A673 (cell line): ENCODE measurements at regions of chr2 and their contacts with region 1.

Region 1: GRCh38 chr2:7363906-7364305 is 446.7 kb downstream of the RNF144A start:
- DNase-seq: peak; percentile 25
- H3K4me3 ChIP-seq: no peak overlapping the region
- H3K27ac ChIP-seq: no peak overlapping the region
- H3K4me1 ChIP-seq: no peaks in the 10 kb centered on the region
- H3K27me3 ChIP-seq: no peaks in the 10 kb centered on the region
- CTCF ChIP-seq: peak; percentile 40

Region 2: GRCh38 chr2:7203055-7203467 is 160.8 kb before region 1 on chr2:
- CTCF ChIA-PET with region 1: no interaction called
- POLR2A ChIA-PET with region 1: no interaction called
- intact Hi-C with region 1: loop called (anchors 5 kb)
- DNase-seq: peak; percentile 83
- H3K4me3 ChIP-seq: no peak overlapping the region
- H3K27ac ChIP-seq: peak overlapping the region; percentile 75
- H3K4me1 ChIP-seq: peaks cover 43% of the 10 kb centered on the region
- H3K27me3 ChIP-seq: no peaks in the 10 kb centered on the region
- CTCF ChIP-seq: peak; percentile 95